ENCODE measurements at regions of chr5 and their contacts with region 1.

Region 1: DNA sequence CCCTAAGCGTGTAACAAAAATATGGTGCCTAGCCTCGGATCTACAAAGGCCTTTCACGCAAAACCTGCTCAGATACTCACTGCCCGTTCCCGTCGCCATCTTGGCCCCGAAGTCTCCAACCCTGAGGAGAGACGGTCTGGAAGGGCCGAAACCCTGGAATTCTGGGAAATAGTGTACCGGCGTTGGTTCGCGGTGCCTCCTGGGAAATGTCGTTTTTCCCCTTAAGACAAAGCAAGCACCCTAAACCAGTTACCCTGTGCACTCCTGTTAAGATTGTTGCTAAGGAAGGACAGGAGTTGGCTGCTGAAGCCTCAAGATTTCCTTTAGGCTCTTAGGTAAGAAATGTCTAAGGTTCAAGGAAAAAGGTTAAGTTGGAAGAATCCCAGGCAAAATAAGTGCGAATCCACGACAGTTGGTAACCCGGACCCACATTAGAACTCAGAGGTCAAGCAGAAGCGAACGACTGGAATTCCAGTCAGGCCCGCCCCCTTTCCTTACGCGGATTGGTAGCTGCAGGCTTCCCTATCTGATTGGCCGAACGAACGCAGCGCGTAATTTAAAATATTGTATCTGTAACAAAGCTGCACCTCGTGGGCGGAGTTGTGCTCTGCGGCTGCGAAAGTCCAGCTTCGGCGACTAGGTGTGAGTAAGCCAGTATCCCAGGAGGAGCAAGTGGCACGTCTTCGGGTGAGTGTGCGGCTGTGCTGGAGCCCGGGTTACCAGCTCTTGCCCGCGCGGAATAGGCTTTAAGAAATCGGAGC is at the starts of genes BRD8 and KIF20A:
- DNase-seq: peak; percentile 95
- H3K4me3 Mint-ChIP-seq: no peak within 1 kb of the TSS
- H3K27ac Mint-ChIP-seq: no peak within 1 kb of the TSS
- H3K4me1 Mint-ChIP-seq: no peaks in the 10 kb centered on the region
- H3K27me3 Mint-ChIP-seq: no peaks in the 10 kb centered on the region
- CTCF ChIP-seq: no peak
- total RNA-seq, gene BRD8: 120 and 124 TPM in 2 replicates
- total RNA-seq, gene KIF20A: 52.6 and 68.9 TPM in 2 replicates

Region 2: DNA sequence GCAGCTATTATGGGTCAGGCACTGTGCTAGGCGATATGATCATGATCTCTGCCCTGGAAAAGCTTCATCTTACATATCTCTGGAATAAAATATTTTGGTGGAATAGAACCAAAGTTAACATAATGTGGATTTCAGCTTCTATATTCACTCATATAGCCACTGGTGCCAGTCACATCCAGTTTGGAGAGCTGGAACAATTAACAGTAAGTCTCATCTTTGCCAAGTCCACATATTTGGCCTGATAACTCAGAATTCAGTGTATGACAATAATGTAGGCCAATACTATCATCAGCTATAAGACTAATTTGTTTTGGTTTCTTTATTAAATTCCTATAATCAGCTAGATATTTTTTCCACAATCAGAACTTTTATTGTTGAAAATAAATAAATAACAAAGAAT is 139.9 kb before region 1 on chr5:
- CTCF ChIA-PET with region 1: no interaction called
- intact Hi-C with region 1: no loop called
- DNase-seq: no peak
- H3K4me3 Mint-ChIP-seq: no peak overlapping the region
- H3K27ac Mint-ChIP-seq: no peak overlapping the region
- H3K4me1 Mint-ChIP-seq: peaks cover 18% of the 10 kb centered on the region
- H3K27me3 Mint-ChIP-seq: no peaks in the 10 kb centered on the region
- CTCF ChIP-seq: no peak

Region 3: GRCh38 chr5:138213161-138214029 is 34.7 kb after region 1 on chr5 and contains the start of gene CDC23:
- CTCF ChIA-PET with region 1: interaction called, 3 read pairs
- intact Hi-C with region 1: loop called (anchors 1 kb)
- DNase-seq: peak; percentile 95
- H3K4me3 Mint-ChIP-seq: peak within 1 kb of the TSS; percentile 99
- H3K27ac Mint-ChIP-seq: peak within 1 kb of the TSS; percentile 99
- H3K4me1 Mint-ChIP-seq: peaks cover 19% of the 10 kb centered on the region
- H3K27me3 Mint-ChIP-seq: no peaks in the 10 kb centered on the region
- CTCF ChIP-seq: no peak
- total RNA-seq, gene CDC23: 45.8 and 46.9 TPM in 2 replicates

Region 4: DNA sequence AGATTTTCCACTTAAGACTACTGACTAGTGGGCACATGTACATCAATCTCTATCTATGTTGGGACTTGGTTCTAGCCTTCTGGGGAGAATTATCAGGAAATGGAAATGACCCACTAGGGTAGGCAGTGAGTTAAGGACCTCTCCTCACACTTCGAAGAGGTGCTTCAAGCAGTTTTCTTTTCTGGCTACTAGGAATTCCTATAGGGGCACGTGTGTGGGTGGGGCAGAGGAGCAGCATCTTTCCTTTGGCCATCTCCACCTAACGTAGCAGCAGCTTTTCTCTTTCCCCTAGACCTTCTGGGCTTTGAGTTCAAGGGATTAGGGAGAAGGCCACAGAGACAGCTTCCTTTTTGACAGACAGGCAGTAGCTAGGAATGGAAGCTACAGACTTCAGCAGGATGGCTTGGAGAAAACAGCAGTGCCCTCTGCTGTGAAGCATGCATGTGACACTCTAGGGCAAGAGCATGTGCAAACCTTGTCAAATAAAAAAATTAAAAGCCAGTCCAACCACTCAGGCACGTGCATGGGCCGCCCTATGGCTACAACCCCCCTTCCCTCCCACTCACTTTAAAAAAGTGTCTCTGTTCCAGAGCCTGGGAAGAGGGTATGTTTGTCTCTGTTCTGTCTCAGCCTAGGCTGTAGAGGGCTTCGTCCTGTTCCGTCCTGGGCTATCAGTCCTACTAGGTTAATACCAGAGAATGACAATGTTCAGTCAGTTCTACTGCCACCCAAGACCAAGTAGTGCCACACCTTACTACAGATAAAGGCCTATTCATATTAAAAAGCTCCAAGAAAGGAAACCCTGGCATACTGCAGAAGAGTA is 104.4 kb after region 1 on chr5:
- CTCF ChIA-PET with region 1: interaction called, 8 read pairs
- intact Hi-C with region 1: loop called (anchors 1 kb)
- DNase-seq: peak; percentile 50
- H3K4me3 Mint-ChIP-seq: no peak overlapping the region
- H3K27ac Mint-ChIP-seq: no peak overlapping the region
- H3K4me1 Mint-ChIP-seq: no peaks in the 10 kb centered on the region
- H3K27me3 Mint-ChIP-seq: peaks cover 3% of the 10 kb centered on the region
- CTCF ChIP-seq: no peak

Region 5: GRCh38 chr5:138352071-138352721 is 173.5 kb after region 1 on chr5 and contains the start of gene KDM3B:
- CTCF ChIA-PET with region 1: interaction called, 3 read pairs
- intact Hi-C with region 1: loop called (anchors 5 kb)
- DNase-seq: peak; percentile 98
- H3K4me3 Mint-ChIP-seq: peak within 1 kb of the TSS; percentile 96
- H3K27ac Mint-ChIP-seq: peak within 1 kb of the TSS; percentile 95
- H3K4me1 Mint-ChIP-seq: peaks cover 17% of the 10 kb centered on the region
- H3K27me3 Mint-ChIP-seq: no peaks in the 10 kb centered on the region
- CTCF ChIP-seq: peak; percentile 98
- total RNA-seq, gene KDM3B: 73.5 and 75.1 TPM in 2 replicates

Region 6: GRCh38 chr5:138418444-138418843 is 239.7 kb after region 1 on chr5:
- CTCF ChIA-PET with region 1: no interaction called
- intact Hi-C with region 1: loop called (anchors 10 kb)
- DNase-seq: no peak
- H3K4me3 Mint-ChIP-seq: no peak overlapping the region
- H3K27ac Mint-ChIP-seq: no peak overlapping the region
- H3K4me1 Mint-ChIP-seq: no peaks in the 10 kb centered on the region
- H3K27me3 Mint-ChIP-seq: no peaks in the 10 kb centered on the region
- CTCF ChIP-seq: no peak

Region 7: DNA sequence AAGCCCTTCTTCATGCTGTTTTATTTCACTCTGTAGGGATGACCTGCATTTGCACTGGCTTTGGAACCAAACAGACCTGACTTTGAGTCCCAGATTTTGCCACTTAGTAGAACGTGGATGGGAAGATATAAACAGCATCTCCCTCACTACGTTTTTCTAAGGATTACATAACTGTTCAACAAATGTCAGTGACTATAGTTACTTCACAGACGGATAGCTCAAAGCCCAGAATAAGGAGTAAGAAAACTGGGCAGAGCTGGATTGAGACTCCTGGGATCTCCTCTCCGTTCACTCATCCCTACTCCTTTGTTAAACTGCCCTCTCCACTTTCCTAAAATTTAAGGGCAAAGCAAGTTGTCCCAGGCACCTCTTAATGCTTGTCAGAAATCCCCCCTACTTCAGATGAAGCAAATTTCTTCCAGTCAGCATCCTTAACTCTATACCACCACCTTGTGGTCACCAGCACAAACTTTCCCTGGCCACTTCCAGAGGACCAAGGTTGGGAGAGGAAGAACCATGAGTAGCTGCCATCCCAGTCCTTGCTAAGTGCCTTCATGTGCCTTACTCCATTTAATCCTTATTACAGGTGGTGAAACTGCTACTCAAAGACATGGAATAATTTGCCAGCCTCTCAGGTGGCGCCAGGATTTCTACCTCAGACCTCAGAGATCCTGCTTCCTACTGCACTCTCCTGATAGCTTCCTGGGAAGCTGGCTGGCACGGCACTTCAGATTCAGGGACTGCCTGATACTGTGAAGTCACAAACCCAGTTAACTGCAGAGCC is 325.0 kb after region 1 on chr5:
- CTCF ChIA-PET with region 1: interaction called, 3 read pairs
- intact Hi-C with region 1: loop called (anchors 2 kb)
- DNase-seq: peak; percentile 59
- H3K4me3 Mint-ChIP-seq: no peak overlapping the region
- H3K27ac Mint-ChIP-seq: no peak overlapping the region
- H3K4me1 Mint-ChIP-seq: no peaks in the 10 kb centered on the region
- H3K27me3 Mint-ChIP-seq: no peaks in the 10 kb centered on the region
- CTCF ChIP-seq: peak; percentile 68